Activated naive CD4-positive, alpha-beta T cell treated with anti-CD3 and anti-CD28 coated beads, Interleukin-2, amount 10 ng/mL, durations not matched to agents 7 days and 5 days (primary cell): ENCODE measurements at regions of chr12 and their contacts with region 1.

Region 1: GRCh38 chr12:50314629-50315312 is 31.5 kb upstream of the LIMA1 start:
- DNase-seq: no peak
- H3K4me3 Mint-ChIP-seq: no peak overlapping the region
- H3K27ac Mint-ChIP-seq: no peak overlapping the region
- H3K4me1 Mint-ChIP-seq: no peaks in the 10 kb centered on the region
- H3K27me3 Mint-ChIP-seq: no peaks in the 10 kb centered on the region

Region 2: GRCh38 chr12:50055831-50056638 is 258.7 kb before region 1 on chr12:
- CTCF ChIA-PET with region 1: no interaction called
- DNase-seq: peak; percentile 72
- H3K4me3 Mint-ChIP-seq: peak overlapping the region; percentile 14
- H3K27ac Mint-ChIP-seq: no peak overlapping the region
- H3K4me1 Mint-ChIP-seq: peaks cover 36% of the 10 kb centered on the region
- H3K27me3 Mint-ChIP-seq: peaks cover 73% of the 10 kb centered on the region

Region 3: DNA sequence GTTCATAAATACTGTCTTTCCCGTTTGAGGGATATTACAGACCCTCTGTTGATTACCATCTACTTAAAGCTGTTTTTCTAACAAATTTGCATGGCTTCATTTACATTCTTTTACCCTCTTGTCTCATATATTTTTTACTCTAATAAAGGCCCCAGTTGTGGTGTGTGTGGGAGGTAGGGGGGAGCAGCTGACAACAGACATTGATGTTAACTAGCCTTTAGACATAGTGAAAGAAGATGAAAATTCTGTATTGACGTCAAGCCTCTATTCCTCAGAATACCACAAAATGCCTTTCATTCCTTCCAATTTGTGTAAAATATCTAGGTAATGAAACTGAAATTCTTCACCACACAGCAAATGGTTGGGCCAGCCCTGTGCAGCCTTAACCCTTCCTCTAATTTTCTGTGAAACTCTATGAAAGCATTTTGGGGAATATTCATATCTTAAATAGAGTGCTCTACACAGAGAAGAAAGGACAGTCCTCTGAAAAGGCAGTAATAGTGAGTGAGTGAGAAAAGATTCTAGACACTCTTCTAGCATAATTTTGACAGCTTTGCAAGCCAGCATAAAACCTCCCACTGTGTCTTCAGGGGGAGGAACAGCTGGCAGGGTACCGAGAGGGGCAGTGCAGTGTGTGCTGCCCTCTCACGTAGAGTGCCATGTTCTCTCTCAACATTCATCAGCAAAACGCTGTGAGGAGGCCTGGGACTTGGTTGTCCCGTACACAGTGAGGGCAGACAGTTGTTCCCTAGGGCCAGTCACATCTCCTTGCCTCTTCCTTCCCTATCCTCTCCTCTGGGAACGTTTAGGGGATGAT is 127.5 kb before region 1 on chr12:
- CTCF ChIA-PET with region 1: interaction called, 10 read pairs
- DNase-seq: no peak
- H3K4me3 Mint-ChIP-seq: no peak overlapping the region
- H3K27ac Mint-ChIP-seq: peak overlapping the region; percentile 73
- H3K4me1 Mint-ChIP-seq: peaks cover 33% of the 10 kb centered on the region
- H3K27me3 Mint-ChIP-seq: no peaks in the 10 kb centered on the region

Region 4: DNA sequence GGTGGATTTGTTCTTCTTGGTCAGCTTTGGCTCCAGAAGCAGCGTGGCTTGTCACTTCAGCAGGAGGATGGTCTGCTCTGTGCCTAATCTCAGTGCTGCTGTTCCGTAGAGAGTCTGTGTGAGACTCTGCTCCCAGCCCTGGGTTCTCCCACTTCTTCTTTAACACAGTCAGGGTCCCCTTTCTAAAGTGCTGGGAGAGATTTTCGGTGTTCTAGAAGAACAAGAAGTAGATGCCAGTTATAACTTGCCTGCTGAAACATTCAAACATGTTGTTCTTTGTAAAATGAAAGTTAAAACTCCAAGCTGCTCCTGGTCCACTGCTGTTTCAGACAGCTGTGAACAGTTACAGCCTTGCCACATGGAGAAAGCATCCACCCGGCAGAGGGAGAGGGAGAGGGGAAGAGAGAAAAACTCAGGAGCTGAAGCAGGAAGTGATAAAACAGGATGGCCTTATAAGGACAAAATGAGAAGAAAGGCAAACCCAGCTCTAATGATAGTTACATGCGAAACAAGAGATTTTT is 92.4 kb before region 1 on chr12:
- CTCF ChIA-PET with region 1: interaction called, 12 read pairs
- DNase-seq: peak; percentile 47
- H3K4me3 Mint-ChIP-seq: no peak overlapping the region
- H3K27ac Mint-ChIP-seq: no peak overlapping the region
- H3K4me1 Mint-ChIP-seq: peaks cover 26% of the 10 kb centered on the region
- H3K27me3 Mint-ChIP-seq: no peaks in the 10 kb centered on the region

Region 5: GRCh38 chr12:50375802-50376201 is 61.0 kb after region 1 on chr12:
- CTCF ChIA-PET with region 1: no interaction called
- DNase-seq: no peak
- H3K4me3 Mint-ChIP-seq: no peak overlapping the region
- H3K27ac Mint-ChIP-seq: no peak overlapping the region
- H3K4me1 Mint-ChIP-seq: no peaks in the 10 kb centered on the region
- H3K27me3 Mint-ChIP-seq: peaks cover 5% of the 10 kb centered on the region